Heart left ventricle (tissue), 16 donors: ENCODE measurements at regions of chr14 and their contacts with region 1.

Region 1: GRCh38 chr14:49862089-49862673 is 9.6 kb upstream of the NEMF start:
- DNase-seq: peak; percentile 79 to 87 (median 86)
- ATAC-seq: peak; percentile 33 to 60 (median 51)
- H3K4me3 ChIP-seq: peak overlapping the region; percentile 26 to 91 (median 70)
- H3K27ac ChIP-seq: peak overlapping the region; percentile 97 to 99 (median 98)
- H3K4me1 ChIP-seq: peaks cover 0 to 47% (median 12%) of the 10 kb centered on the region in 12 donors
- H3K27me3 ChIP-seq: no peaks in the 10 kb centered on the region
- CTCF ChIP-seq: peak; percentile 99 to 100 (median 100)
- POLR2A ChIP-seq: no peak

Region 2: GRCh38 chr14:49754570-49755097 is 107.5 kb before region 1 on chr14:
- intact Hi-C with region 1: no loop called
- DNase-seq: no peak
- ATAC-seq: no peak
- H3K4me3 ChIP-seq: no peak overlapping the region
- H3K27ac ChIP-seq: no peak overlapping the region
- H3K4me1 ChIP-seq: no peaks in the 10 kb centered on the region
- H3K27me3 ChIP-seq: no peaks in the 10 kb centered on the region
- CTCF ChIP-seq: no peak
- POLR2A ChIP-seq: no peak

Region 3: GRCh38 chr14:50045039-50045711 is 183.0 kb after region 1 on chr14:
- intact Hi-C with region 1: loop called in 2 of 10 experiments (anchors 5 kb)
- DNase-seq: peak; percentile 79 to 88 (median 84)
- ATAC-seq: peak; percentile 88 to 94 (median 91)
- H3K4me3 ChIP-seq: no peak overlapping the region
- H3K27ac ChIP-seq: peak overlapping the region; percentile 58 to 95 (median 73)
- H3K4me1 ChIP-seq: peaks cover 0 to 66% (median 35%) of the 10 kb centered on the region in 12 donors
- H3K27me3 ChIP-seq: no peaks in the 10 kb centered on the region
- CTCF ChIP-seq: peak in 2 of 12 donors; percentile 9 to 15
- POLR2A ChIP-seq: no peak

Region 4: GRCh38 chr14:50109342-50109741 is 247.2 kb after region 1 on chr14:
- intact Hi-C with region 1: loop called (anchors 1 to 5 kb)
- DNase-seq: no peak
- ATAC-seq: no peak
- H3K4me3 ChIP-seq: no peak overlapping the region
- H3K27ac ChIP-seq: no peak overlapping the region
- H3K4me1 ChIP-seq: peaks cover 0 to 6% (median 2%) of the 10 kb centered on the region in 12 donors
- H3K27me3 ChIP-seq: no peaks in the 10 kb centered on the region
- CTCF ChIP-seq: no peak
- POLR2A ChIP-seq: no peak

Region 5: DNA sequence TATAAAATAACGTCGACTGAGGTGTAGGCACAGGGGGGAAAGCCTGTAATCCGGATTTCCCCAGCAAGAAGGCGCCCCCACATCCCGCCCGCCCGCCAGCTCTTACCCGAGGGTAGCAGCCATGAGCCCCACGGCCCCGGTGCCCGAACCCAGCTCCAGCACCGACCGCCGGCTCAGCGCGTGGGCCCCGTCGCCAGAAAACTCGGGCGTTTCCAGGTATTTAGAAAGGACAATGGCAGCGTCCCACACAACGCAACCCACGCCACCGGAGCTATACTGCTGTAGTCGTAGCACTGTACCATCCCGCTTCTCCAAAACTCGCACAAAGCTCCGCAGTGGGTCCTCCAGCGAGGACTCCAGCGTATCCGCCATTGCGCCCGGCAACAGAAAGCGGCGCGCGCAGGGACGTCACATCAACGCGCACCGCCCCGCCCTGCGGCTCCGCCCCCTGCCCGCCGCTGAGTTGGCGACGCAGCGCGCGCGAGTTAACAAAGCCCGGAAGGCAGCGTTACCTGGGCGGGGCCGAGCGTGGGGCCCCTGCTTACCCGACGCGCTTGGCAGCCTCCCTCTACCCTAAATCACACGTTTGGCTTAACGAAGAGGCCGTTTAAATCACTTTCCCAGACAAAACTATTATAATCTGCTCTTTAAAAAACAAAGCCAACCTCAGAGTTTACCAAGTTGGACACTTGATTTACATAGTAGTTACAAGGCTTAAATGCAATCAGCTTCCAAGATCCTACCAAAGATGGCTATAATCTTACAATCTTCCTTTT is 254.2 kb after region 1 on chr14 and contains the start of gene VCPKMT:
- intact Hi-C with region 1: loop called in 1 of 10 experiments (anchors 2 kb)
- DNase-seq: peak; percentile 94 to 97 (median 95)
- ATAC-seq: peak; percentile 97 to 100 (median 100)
- H3K4me3 ChIP-seq: peak within 1 kb of the TSS; percentile 68 to 87 (median 72)
- H3K27ac ChIP-seq: peak within 1 kb of the TSS; percentile 66 to 90 (median 82)
- H3K4me1 ChIP-seq: peaks cover 0 to 22% (median 14%) of the 10 kb centered on the region in 12 donors
- H3K27me3 ChIP-seq: no peaks in the 10 kb centered on the region
- CTCF ChIP-seq: peak in 1 of 12 donors; percentile 8
- POLR2A ChIP-seq: peak; percentile 11 to 89
- total RNA-seq, gene VCPKMT: 0.95 to 4.9 (median 2.9) TPM

Region 6: DNA sequence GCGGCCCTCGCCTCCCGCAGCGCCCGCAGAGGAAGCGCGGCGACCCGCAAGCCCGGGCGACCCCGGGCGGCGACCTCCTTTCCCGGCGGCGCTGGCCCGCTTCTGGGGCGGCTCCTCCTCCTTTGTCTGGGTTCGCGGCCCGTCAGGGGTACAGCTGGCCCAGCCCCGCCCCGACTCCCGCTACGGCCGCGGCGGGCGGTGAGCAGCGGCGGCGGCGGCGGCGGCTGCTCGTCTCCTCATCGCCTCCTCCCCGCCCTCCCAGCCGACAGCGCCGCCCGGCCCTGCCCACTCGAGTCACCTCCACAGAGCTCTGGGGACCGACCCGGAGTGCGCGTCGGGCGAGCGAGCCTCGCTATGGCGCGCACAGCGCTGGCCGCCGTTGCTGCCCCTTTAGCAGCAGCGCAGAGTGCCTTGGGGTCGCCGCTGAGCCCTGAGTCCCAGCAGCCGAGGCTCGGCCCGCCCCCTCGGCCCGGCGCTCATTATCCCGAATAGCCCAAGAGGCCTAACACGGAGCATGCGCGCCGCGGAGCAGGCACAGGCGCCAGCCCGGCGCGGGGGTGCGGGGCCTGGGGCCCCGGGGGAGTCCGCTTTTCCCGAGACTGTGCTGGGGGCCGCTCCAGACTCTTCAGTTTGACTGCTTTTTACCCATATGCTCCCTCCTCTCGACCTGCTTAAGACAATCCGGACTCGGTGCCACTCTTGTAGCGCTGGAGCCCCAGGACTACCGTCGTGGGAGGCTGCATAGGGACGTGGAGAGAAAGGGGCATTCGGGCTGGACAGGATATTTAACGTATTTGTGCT is 369.5 kb after region 1 on chr14 and contains the start of gene SOS2:
- intact Hi-C with region 1: loop called in 2 of 10 experiments (anchors 5 kb)
- DNase-seq: peak; percentile 89 to 94 (median 92)
- ATAC-seq: peak; percentile 82 to 96 (median 95)
- H3K4me3 ChIP-seq: peak within 1 kb of the TSS; percentile 67 to 95 (median 80)
- H3K27ac ChIP-seq: peak within 1 kb of the TSS; percentile 93 to 99 (median 98)
- H3K4me1 ChIP-seq: peaks cover 0 to 53% (median 40%) of the 10 kb centered on the region in 12 donors
- H3K27me3 ChIP-seq: no peaks in the 10 kb centered on the region
- CTCF ChIP-seq: peak in 3 of 12 donors; percentile 23 to 37 (median 26)
- POLR2A ChIP-seq: peak; percentile 42 to 84
- total RNA-seq, gene SOS2: 26.4 to 47.3 (median 31.5) TPM